ENCODE measurements at regions of chr2 and their contacts with region 1.

Region 1: GRCh38 chr2:110818767-110819481 is 86.6 kb downstream of the ACOXL start:
- DNase-seq: no peak

Region 2: GRCh38 chr2:111667542-111668273 is 848.8 kb after region 1 on chr2:
- intact Hi-C with region 1: loop called (anchors 10 kb)
- DNase-seq: no peak